ENCODE measurements at regions of chr19 and their contacts with region 1.

Region 1: DNA sequence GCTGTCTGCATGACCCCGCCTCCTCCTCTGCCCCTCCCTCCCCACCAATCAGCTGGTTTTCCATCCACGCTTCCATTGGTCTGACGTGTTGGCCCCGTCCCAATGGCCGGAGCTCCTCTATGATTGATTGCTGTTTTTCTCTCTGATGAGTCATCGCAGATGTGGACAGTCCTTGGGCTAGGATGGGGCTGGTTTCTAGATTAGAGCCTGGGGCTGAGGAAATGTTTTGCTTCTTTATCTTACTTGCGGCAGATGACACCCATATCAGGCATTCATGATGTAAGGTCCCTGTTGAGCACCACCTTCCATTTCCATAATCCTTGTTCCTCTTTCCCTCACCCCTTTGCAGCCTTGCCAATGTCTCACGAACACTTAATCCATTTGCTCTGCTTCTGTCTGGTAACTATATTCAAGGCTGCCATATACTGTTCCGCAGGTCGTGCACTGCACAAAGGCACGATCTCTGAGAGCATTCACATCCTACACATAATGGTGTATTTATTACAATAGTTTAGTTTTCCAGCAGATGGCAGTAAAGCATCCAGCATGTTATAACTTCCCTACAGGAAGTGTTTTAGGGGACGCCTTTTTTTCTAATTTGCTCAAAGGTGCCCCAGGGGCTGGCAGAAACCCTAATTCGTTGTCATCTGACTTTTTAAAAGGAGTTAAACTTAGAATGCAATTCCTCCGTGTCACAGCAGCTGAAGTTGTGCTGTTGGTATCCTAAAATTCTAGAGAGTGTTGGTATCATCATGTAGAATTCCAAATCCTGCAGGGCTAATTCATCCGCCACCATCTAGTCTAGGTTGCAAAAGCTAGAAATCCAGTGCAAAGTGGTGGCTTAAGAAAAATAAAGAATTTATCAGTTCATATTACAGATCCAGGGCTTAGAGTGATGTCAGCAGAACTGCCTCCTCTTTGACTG is 73.5 kb downstream of the MAP4K1 start:
- DNase-seq: peak; percentile 74
- H3K4me3 ChIP-seq: peak overlapping the region in 1 of 2 donors; percentile 10
- H3K27ac ChIP-seq: no peak overlapping the region
- H3K4me1 ChIP-seq: peaks cover 7% of the 10 kb centered on the region
- H3K27me3 ChIP-seq: no peaks in the 10 kb centered on the region
- CTCF ChIP-seq: peak; percentile 17 to 40 (median 40)
- POLR2A ChIP-seq: no peak

Region 2: DNA sequence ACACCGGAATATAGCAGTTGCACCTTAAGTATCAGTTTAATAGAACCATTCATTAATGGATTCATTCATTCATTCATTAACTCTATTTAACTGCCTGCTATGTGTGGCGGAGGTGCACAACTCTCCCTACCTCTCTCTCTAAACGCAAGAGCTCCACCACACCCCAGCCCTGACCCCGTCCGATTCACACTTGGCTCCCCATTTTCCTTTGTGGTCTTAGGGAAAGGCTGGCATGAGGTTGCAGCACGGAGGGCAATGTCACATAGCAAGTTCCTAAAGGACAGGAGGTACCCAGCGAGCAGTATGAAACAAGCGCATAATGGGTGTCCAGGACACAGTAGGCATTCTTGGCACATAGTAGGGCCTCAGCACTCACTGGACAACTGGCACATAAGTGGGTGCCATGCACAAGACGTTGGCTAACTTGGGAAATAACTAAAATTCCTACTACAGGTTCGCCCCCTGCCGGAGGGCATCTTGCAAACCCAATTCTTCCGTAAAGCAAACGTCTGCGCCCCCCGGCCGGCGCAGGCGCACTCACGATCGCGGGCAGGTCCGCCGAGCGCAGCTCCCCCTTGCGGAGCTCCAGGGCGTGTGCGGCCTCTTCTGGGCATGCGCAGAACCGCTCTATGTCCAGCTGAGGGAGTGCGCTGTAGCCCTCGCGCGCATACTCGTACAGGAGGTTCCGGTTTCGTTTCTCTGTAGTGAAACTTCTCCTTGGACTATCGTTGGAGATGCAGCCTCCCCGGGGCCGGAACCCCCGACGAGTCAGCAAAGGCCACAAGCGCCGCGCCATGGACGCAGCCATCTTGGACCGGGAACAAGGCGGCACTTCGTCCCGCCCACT is 385.9 kb after region 1 on chr19 and contains the start of gene SARS2:
- intact Hi-C with region 1: loop called (anchors 10 kb)
- DNase-seq: peak; percentile 94
- H3K4me3 ChIP-seq: peak within 1 kb of the TSS; percentile 65 to 69
- H3K27ac ChIP-seq: peak within 1 kb of the TSS; percentile 63 to 88
- H3K4me1 ChIP-seq: peaks cover 19% of the 10 kb centered on the region
- H3K27me3 ChIP-seq: no peaks in the 10 kb centered on the region
- CTCF ChIP-seq: peak; percentile 95 to 99 (median 99)
- POLR2A ChIP-seq: no peak
- total RNA-seq, gene SARS2: 55.3 to 68.0 TPM

Measured in testis (tissue), 5 donors.